Transverse colon (tissue), 4 donors: ENCODE measurements at regions of chr2 and their contacts with region 1.

Region 1: GRCh38 chr2:54522624-54523281 is 66.6 kb downstream of the SPTBN1 start:
- DNase-seq: peak; percentile 67
- H3K4me3 ChIP-seq: no peak overlapping the region
- H3K27ac ChIP-seq: no peak overlapping the region
- H3K4me1 ChIP-seq: peaks cover 0 to 13% (median 8%) of the 10 kb centered on the region in 4 donors
- H3K27me3 ChIP-seq: no peaks in the 10 kb centered on the region
- CTCF ChIP-seq: peak; percentile 56 to 81 (median 67)
- EP300 ChIP-seq: no peak
- POLR2A ChIP-seq: no peak

Region 2: DNA sequence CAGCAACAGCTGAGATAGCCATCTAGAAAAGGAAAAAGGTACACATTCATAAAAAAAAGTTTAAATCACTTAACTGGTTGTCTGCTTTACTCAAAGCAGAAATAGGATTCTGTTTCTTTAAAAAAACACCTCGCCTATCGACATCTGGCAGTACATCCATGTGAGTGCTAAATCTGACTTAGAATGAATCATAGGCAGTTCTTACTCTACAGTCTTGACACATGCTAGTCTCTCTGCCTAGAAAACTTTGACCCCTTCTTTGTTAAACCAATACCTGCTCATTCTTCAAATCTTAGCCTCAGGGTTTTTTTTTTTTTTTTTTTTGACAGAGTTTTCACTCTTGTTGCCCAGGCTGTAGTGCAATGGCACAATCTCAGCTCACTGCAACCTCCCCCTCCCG is 625.9 kb before region 1 on chr2:
- in situ Hi-C with region 1: no loop called
- intact Hi-C with region 1: no loop called
- DNase-seq: no peak
- H3K4me3 ChIP-seq: no peak overlapping the region
- H3K27ac ChIP-seq: no peak overlapping the region
- H3K4me1 ChIP-seq: no peaks in the 10 kb centered on the region
- H3K27me3 ChIP-seq: no peaks in the 10 kb centered on the region
- CTCF ChIP-seq: no peak
- EP300 ChIP-seq: no peak
- POLR2A ChIP-seq: no peak

Region 3: GRCh38 chr2:54115284-54116137 is 407.2 kb before region 1 on chr2 and contains the start of gene ACYP2:
- in situ Hi-C with region 1: loop called in 1 of 4 experiments (anchors 25 kb)
- intact Hi-C with region 1: no loop called
- DNase-seq: peak; percentile 95
- H3K4me3 ChIP-seq: peak within 1 kb of the TSS; percentile 55 to 76 (median 72)
- H3K27ac ChIP-seq: peak within 1 kb of the TSS; percentile 96 to 98 (median 98)
- H3K4me1 ChIP-seq: peaks cover 4 to 8% (median 4%) of the 10 kb centered on the region in 4 donors
- H3K27me3 ChIP-seq: no peaks in the 10 kb centered on the region
- CTCF ChIP-seq: peak in 4 of 5 experiments; percentile 10 to 31 (median 16)
- EP300 ChIP-seq: no peak
- POLR2A ChIP-seq: peak; percentile 77
- total RNA-seq, gene ACYP2: 1.6 to 77.4 (median 11.4) TPM

Region 4: GRCh38 chr2:54634564-54635511 is 112.1 kb after region 1 on chr2:
- in situ Hi-C with region 1: loop called in 1 of 4 experiments (anchors 25 kb)
- intact Hi-C with region 1: no loop called
- DNase-seq: peak; percentile 22
- H3K4me3 ChIP-seq: peak overlapping the region in 1 of 4 donors; percentile 4
- H3K27ac ChIP-seq: peak overlapping the region; percentile 47 to 78 (median 64)
- H3K4me1 ChIP-seq: peaks cover 11 to 46% (median 18%) of the 10 kb centered on the region in 4 donors
- H3K27me3 ChIP-seq: no peaks in the 10 kb centered on the region
- CTCF ChIP-seq: no peak
- EP300 ChIP-seq: no peak
- POLR2A ChIP-seq: no peak

Region 5: DNA sequence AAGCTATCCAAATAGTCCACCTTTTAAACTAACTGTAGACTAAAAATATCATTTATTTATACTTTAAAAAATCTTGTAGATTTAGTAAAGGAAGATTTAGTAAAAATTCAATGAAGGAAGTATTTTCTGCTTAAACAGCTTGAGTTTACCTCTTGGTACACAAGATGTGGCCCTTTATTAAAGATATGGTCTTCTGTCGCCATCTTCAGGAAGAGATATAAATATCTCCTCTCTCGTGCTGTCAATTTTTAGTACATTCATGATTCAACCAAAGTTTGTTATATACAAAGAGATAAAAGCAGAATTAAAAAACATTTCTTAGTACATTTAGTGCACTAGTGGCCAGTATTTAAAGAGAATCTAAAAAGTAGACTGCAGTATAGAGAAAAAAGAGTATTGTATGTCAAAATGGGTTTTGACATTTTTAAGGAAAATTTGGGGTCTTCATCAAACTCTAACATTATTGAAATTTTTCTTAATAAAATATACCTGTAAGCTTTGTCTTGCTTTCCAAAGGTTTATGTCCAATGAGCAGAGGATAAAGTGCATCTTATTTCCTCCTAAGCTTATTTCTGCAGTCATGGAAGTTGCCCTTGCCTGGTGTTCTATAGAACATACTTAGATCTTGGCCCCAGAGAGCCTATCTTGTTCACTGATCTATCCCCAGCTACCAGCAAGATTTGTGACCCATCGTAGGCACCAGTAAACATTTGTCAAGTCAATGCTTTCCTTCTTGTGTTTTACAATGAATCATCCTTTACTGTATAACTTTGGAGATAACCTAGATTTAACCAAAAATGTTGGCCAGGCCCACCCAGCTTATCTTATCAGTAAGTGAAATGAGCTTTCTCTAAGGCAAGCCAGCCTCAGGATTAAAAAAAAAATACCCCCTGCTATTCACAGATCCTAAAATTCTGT is 182.2 kb after region 1 on chr2:
- in situ Hi-C with region 1: loop called in 3 of 4 experiments (anchors 10 kb)
- intact Hi-C with region 1: loop called (anchors 10 kb)
- DNase-seq: no peak
- H3K4me3 ChIP-seq: no peak overlapping the region
- H3K27ac ChIP-seq: no peak overlapping the region
- H3K4me1 ChIP-seq: peaks cover 3 to 20% (median 10%) of the 10 kb centered on the region in 4 donors
- H3K27me3 ChIP-seq: peaks cover 4% of the 10 kb centered on the region
- CTCF ChIP-seq: peak; percentile 52 to 64 (median 60)
- EP300 ChIP-seq: no peak
- POLR2A ChIP-seq: no peak

Region 6: DNA sequence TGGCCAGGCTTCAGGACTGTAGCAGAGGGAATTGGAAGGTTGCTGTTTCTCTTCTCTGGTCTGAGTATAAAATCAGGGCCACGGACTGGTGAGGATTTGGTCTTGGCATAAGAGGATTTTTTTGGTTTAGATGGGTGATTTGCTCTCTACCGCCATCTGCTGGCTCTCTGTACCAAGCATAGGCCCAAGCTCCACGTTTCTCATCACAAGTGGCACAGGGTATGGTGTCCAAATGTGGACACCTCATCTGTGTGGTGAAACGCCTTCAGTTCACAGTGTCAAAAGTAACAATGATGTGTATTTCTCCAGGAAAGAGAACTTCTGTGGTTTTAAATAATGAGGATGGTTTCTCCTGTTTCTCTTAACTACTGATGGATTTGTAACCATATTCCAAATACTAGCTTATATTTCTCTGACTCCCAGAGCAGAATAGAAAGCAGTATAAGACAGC is 315.9 kb after region 1 on chr2:
- in situ Hi-C with region 1: loop called in 2 of 4 experiments (anchors 10 to 25 kb)
- intact Hi-C with region 1: no loop called
- DNase-seq: peak; percentile 67
- H3K4me3 ChIP-seq: no peak overlapping the region
- H3K27ac ChIP-seq: no peak overlapping the region
- H3K4me1 ChIP-seq: no peaks in the 10 kb centered on the region
- H3K27me3 ChIP-seq: no peaks in the 10 kb centered on the region
- CTCF ChIP-seq: peak; percentile 76 to 93 (median 89)
- EP300 ChIP-seq: no peak
- POLR2A ChIP-seq: no peak

Region 7: DNA sequence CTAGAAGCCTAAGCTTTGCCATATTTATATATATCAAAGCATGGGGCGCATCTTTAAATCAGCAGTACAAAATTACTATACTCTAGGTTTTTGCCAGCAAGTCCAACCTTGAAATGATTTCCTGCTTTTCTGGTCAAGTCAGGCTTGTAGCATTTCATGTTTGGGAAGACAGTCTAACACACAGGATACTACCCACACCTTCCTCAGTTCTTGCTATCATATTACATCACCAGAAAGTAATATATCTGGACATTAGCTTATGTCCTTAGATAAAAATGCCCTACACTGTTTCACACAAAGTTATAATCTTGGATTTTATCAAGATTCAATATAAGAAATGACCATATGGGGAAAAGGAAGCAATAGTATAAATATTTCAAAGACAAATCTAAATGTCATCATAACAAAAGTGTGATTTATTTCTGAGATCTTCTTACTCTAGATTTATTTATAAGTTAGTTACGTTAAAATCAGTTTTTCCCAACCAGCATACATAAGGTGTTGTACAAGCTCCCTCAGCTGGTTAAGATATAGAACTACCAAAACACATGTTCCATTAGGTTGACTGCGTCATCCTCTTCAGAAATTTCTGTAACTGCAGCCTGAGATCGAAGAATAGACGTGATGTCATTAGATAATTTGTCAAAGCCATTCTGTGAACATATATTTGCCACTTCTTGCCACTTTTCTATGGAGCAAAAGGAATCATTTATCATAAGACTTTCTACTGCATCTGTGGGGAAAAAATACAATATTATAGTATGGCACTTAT is 652.7 kb after region 1 on chr2:
- in situ Hi-C with region 1: loop called in 1 of 4 experiments (anchors 25 kb)
- intact Hi-C with region 1: no loop called
- DNase-seq: no peak
- H3K4me3 ChIP-seq: no peak overlapping the region
- H3K27ac ChIP-seq: no peak overlapping the region
- H3K4me1 ChIP-seq: peaks cover 0 to 4% (median 0%) of the 10 kb centered on the region in 4 donors
- H3K27me3 ChIP-seq: no peaks in the 10 kb centered on the region
- CTCF ChIP-seq: peak; percentile 50 to 70 (median 56)
- EP300 ChIP-seq: no peak
- POLR2A ChIP-seq: no peak